CD4-positive, alpha-beta memory T cell (primary cell): ENCODE measurements at regions of chr11 and their contacts with region 1.

Region 1: GRCh38 chr11:75582895-75583717 is 21.1 kb downstream of the SERPINH1 start:
- DNase-seq: peak; percentile 15 to 68 (median 44)
- H3K4me3 ChIP-seq: peak overlapping the region; percentile 58 to 67
- H3K4me3 Mint-ChIP-seq: peak overlapping the region; percentile 76 to 89 (median 86)
- H3K27ac ChIP-seq: peak overlapping the region; percentile 54
- H3K27ac Mint-ChIP-seq: peak overlapping the region in 6 of 7 donors; percentile 42 to 89 (median 80)
- H3K4me1 ChIP-seq: peaks cover 11% of the 10 kb centered on the region
- H3K4me1 Mint-ChIP-seq: peaks cover 8 to 19% (median 15%) of the 10 kb centered on the region in 4 donors
- H3K27me3 ChIP-seq: no peaks in the 10 kb centered on the region
- H3K27me3 Mint-ChIP-seq: peaks cover 0 to 2% of the 10 kb centered on the region in 2 donors

Region 2: GRCh38 chr11:75562048-75562835 is 20.9 kb before region 1 on chr11 and contains the start of gene SERPINH1:
- CTCF ChIA-PET with region 1: interaction called, 3 read pairs
- POLR2A ChIA-PET with region 1: interaction called, 6 read pairs
- intact Hi-C with region 1: loop called (anchors 1 kb)
- DNase-seq: peak; percentile 43 to 67 (median 49)
- H3K4me3 ChIP-seq: peak within 1 kb of the TSS; percentile 86 to 96
- H3K4me3 Mint-ChIP-seq: peak within 1 kb of the TSS; percentile 93 to 99 (median 99)
- H3K27ac ChIP-seq: peak within 1 kb of the TSS; percentile 71
- H3K27ac Mint-ChIP-seq: peak within 1 kb of the TSS; percentile 91 to 98 (median 96)
- H3K4me1 ChIP-seq: peaks cover 20% of the 10 kb centered on the region
- H3K4me1 Mint-ChIP-seq: peaks cover 12 to 49% (median 33%) of the 10 kb centered on the region in 4 donors
- H3K27me3 ChIP-seq: no peaks in the 10 kb centered on the region
- H3K27me3 Mint-ChIP-seq: no peaks in the 10 kb centered on the region
- total RNA-seq, gene SERPINH1: 15.6 to 16.2 TPM